MCF 10A (cell line): ENCODE measurements at regions of chr12 and their contacts with region 1.

Region 1: GRCh38 chr12:65121049-65121955 is at the start of gene WIF1:
- DNase-seq: no peak
- H3K4me3 Mint-ChIP-seq: no peak within 1 kb of the TSS
- H3K27ac Mint-ChIP-seq: no peak within 1 kb of the TSS
- H3K4me1 Mint-ChIP-seq: no peaks in the 10 kb centered on the region
- H3K27me3 Mint-ChIP-seq: peaks cover 68% of the 10 kb centered on the region
- CTCF ChIP-seq: peak; percentile 43
- total RNA-seq, gene WIF1: not detected in 2 replicates

Region 2: GRCh38 chr12:65098364-65098763 is 22.9 kb before region 1 on chr12:
- CTCF ChIA-PET with region 1: no interaction called
- POLR2A ChIA-PET with region 1: no interaction called
- intact Hi-C with region 1: no loop called
- DNase-seq: peak; percentile 71
- H3K4me3 Mint-ChIP-seq: no peak overlapping the region
- H3K27ac Mint-ChIP-seq: no peak overlapping the region
- H3K4me1 Mint-ChIP-seq: no peaks in the 10 kb centered on the region
- H3K27me3 Mint-ChIP-seq: peaks cover 80% of the 10 kb centered on the region
- CTCF ChIP-seq: no peak

Region 3: GRCh38 chr12:65147312-65147905 is 26.1 kb after region 1 on chr12:
- CTCF ChIA-PET with region 1: no interaction called
- POLR2A ChIA-PET with region 1: no interaction called
- intact Hi-C with region 1: no loop called
- DNase-seq: no peak
- H3K4me3 Mint-ChIP-seq: no peak overlapping the region
- H3K27ac Mint-ChIP-seq: no peak overlapping the region
- H3K4me1 Mint-ChIP-seq: peaks cover 6% of the 10 kb centered on the region
- H3K27me3 Mint-ChIP-seq: peaks cover 94% of the 10 kb centered on the region
- CTCF ChIP-seq: no peak

Region 4: DNA sequence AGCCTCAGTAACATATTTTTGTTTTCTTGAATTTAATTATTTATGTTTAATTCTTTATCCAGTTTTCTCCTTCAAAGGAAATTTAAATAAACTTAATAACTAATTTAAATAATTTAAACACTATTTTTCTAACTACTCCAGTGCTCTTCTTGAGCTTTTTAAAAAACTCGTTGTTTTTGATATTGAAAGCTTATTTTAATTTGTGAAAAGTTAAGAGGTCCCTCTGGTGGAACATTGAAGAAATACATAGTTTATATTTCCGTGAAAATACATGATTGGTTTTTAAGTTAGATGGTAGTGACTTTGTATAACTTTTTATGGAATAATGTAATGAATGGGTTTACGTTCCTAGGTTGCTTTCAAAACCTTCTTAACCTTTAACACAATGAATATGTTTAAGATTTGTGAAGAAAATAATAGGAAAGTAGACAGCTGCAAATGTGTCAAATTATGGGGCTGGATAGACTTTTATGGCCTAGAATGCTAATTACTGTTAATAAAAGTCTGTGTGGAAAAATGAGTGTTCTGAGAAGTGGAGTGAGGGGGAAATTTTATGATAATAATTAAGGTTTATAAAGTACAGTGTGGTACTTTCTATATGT is 111.3 kb after region 1 on chr12:
- CTCF ChIA-PET with region 1: interaction called, 4 read pairs
- POLR2A ChIA-PET with region 1: no interaction called
- intact Hi-C with region 1: loop called (anchors 5 kb)
- DNase-seq: peak; percentile 28
- H3K4me3 Mint-ChIP-seq: no peak overlapping the region
- H3K27ac Mint-ChIP-seq: peak overlapping the region; percentile 29
- H3K4me1 Mint-ChIP-seq: peaks cover 17% of the 10 kb centered on the region
- H3K27me3 Mint-ChIP-seq: no peaks in the 10 kb centered on the region
- CTCF ChIP-seq: peak; percentile 29